ENCODE measurements at regions of chr18 and their contacts with region 1.

Region 1: GRCh38 chr18:28757466-28758008 is 580.6 kb upstream of the CDH2 start:
- DNase-seq: no peak
- ATAC-seq: no peak
- H3K4me3 ChIP-seq: no peak overlapping the region
- H3K4me3 Mint-ChIP-seq: no peak overlapping the region
- H3K27ac ChIP-seq: no peak overlapping the region
- H3K27ac Mint-ChIP-seq: no peak overlapping the region
- H3K4me1 ChIP-seq: no peaks in the 10 kb centered on the region
- H3K4me1 Mint-ChIP-seq: no peaks in the 10 kb centered on the region
- H3K27me3 ChIP-seq: no peaks in the 10 kb centered on the region
- H3K27me3 Mint-ChIP-seq: no peaks in the 10 kb centered on the region
- CTCF ChIP-seq: no peak

Region 2: DNA sequence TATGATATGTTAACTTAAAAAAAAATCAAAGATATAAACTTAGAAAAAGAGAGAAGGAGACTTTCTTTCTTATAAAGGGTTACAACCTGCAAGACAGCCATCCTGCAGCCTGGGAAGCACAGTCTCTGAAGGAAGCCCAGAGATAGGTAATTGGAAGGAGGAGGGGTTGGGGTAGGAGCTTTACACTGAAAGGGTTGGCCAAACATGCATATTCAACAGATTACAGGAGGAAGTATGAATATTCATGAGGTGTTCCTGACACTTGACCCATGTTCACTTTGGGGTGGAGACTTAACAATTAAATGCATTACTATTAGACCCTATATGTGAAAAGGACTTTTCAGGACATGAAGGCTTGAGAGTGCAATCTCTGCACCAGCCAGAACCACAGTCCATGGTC is 508.9 kb before region 1 on chr18:
- CTCF ChIA-PET with region 1: no interaction called
- POLR2A ChIA-PET with region 1: no interaction called
- intact Hi-C with region 1: no loop called
- DNase-seq: no peak
- ATAC-seq: no peak
- H3K4me3 ChIP-seq: no peak overlapping the region
- H3K4me3 Mint-ChIP-seq: no peak overlapping the region
- H3K27ac ChIP-seq: no peak overlapping the region
- H3K27ac Mint-ChIP-seq: no peak overlapping the region
- H3K4me1 ChIP-seq: no peaks in the 10 kb centered on the region
- H3K4me1 Mint-ChIP-seq: no peaks in the 10 kb centered on the region
- H3K27me3 ChIP-seq: no peaks in the 10 kb centered on the region
- H3K27me3 Mint-ChIP-seq: no peaks in the 10 kb centered on the region
- CTCF ChIP-seq: no peak

Region 3: DNA sequence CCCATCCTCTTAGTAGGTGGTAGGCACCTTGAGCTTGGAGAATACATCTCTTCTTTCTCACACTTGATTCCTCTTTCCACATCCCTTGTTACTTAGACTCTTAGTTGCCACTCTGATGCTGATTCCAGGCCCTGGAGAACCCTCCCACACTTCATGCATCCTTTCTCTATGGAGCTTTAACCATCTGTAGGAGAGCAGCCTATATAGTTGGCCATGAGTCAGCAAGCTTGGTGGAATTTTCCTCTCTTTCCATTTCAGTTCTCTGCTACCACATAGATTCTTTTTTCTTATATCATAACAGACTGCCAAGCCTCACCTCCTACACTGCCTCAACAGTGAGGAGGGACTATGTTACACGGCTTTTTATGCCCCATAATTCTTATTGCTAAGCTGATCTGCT is 271.0 kb after region 1 on chr18:
- CTCF ChIA-PET with region 1: no interaction called
- POLR2A ChIA-PET with region 1: no interaction called
- intact Hi-C with region 1: loop called in 1 of 2 experiments (anchors 5 kb)
- DNase-seq: no peak
- ATAC-seq: no peak
- H3K4me3 ChIP-seq: no peak overlapping the region
- H3K4me3 Mint-ChIP-seq: no peak overlapping the region
- H3K27ac ChIP-seq: no peak overlapping the region
- H3K27ac Mint-ChIP-seq: no peak overlapping the region
- H3K4me1 ChIP-seq: no peaks in the 10 kb centered on the region
- H3K4me1 Mint-ChIP-seq: no peaks in the 10 kb centered on the region
- H3K27me3 ChIP-seq: no peaks in the 10 kb centered on the region
- H3K27me3 Mint-ChIP-seq: no peaks in the 10 kb centered on the region
- CTCF ChIP-seq: no peak